GM18951 (cell line): ENCODE measurements at regions of chr7 and their contacts with region 1.

Region 1: DNA sequence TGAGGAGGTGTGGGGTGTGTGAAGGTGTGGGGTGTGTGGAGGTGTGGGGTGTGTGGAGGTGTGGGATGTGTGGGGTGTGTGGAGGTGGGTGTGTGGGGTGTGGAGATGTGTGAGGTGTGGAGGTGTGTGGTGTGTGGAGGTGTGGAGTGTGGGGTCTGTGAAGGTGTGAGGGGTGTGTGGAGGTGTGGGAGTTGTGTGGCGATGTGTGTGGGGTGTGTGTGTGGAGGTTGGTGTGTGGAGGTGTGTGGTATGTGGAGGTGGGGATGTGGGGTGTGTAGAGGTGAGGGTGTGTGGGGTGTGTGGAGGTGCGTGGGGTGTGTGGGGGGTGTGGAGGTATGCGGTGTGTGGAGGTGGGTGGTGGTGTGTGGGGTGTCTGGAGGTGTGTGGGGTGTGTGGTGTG is 34.8 kb downstream of the SPDYE17 start:
- POLR2A ChIP-seq: no peak

Region 2: DNA sequence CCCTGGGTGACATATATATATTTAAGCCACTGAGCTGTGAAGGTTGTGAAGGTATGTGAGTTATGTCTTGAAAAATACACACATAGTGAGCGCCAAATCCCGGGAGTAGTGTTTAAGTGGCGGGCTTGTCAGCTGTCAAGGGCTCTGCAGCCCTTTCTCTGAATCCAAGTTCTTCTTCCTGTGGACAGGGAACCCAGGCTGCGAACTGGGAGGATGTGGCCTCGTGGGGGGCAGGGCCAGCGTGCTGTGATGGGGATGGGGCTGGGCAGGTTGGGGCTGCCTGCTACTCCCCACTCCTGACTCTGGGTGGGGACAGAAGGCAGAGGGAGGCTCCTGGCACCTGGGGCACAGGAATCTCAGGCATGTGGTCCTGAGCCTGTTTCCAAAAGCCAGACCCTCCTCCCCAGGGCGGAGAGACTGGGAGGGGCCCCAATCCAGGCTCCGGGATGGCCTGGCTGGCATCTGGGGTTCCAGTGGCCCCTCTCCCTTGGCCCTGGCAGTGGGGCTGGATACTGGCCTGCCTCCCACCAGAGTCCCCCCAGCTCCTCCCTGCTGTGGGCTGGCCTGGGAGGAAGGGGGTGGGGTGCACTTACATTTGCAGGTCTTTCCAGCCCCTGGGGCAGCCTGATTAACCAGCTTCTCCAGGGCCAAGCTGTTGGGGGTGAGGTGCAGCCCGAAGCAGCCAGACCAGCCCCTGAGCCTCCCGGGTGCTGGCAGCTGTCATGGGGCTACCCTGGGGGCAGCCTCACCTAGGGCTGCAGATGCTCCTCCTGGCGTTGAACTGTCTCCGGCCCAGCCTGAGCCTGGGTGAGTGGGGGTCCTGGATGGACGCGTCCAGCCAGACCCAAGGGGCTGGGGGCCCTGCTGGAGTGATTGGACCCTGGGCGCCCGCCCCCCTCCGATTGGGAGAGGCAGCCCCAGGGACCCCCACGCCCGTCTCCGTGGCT is 487.2 kb before region 1 on chr7 and contains the start of gene UPK3B:
- in situ Hi-C with region 1: loop called (anchors 10 kb)
- POLR2A ChIP-seq: no peak

Region 3: GRCh38 chr7:78326876-78327275 is 1329.5 kb after region 1 on chr7:
- in situ Hi-C with region 1: no loop called
- POLR2A ChIP-seq: no peak